ENCODE measurements at regions of chr20 and their contacts with region 1.

Region 1: GRCh38 chr20:10696650-10697049 is 22.9 kb upstream of the JAG1 start:
- DNase-seq: no peak
- H3K4me3 ChIP-seq: no peak overlapping the region
- H3K27ac ChIP-seq: no peak overlapping the region
- H3K4me1 ChIP-seq: no peaks in the 10 kb centered on the region
- H3K27me3 ChIP-seq: no peaks in the 10 kb centered on the region
- CTCF ChIP-seq: peak in 1 of 3 experiments; percentile 11
- POLR2A ChIP-seq: no peak

Region 2: GRCh38 chr20:10131612-10132345 is 564.9 kb before region 1 on chr20:
- intact Hi-C with region 1: no loop called
- DNase-seq: no peak
- H3K4me3 ChIP-seq: no peak overlapping the region
- H3K27ac ChIP-seq: no peak overlapping the region
- H3K4me1 ChIP-seq: no peaks in the 10 kb centered on the region
- H3K27me3 ChIP-seq: no peaks in the 10 kb centered on the region
- CTCF ChIP-seq: no peak
- POLR2A ChIP-seq: no peak

Region 3: DNA sequence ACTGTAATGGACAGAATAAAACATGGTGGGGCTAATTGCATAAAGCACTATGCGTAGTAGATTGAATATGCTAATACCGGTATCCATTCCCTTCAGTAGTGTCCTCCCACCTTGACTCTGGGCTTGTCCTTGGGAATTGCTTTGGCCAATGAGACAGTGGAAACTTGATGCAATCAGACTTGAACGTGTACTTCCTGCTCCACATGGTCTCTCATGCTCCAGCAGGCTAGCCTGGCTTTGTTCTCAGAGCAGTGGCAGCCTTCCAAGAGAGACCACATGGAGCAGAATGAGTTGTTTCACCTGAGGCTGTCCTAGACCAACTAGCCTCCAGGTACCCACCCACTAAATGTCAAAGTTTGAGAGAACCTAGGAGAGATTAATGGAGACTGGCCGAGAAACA is 1184.0 kb after region 1 on chr20:
- intact Hi-C with region 1: loop called (anchors 10 kb)
- DNase-seq: no peak
- H3K4me3 ChIP-seq: no peak overlapping the region
- H3K27ac ChIP-seq: no peak overlapping the region
- H3K4me1 ChIP-seq: no peaks in the 10 kb centered on the region
- H3K27me3 ChIP-seq: no peaks in the 10 kb centered on the region
- CTCF ChIP-seq: no peak
- POLR2A ChIP-seq: no peak